ENCODE measurements at regions of chr17 and their contacts with region 1.

Region 1: DNA sequence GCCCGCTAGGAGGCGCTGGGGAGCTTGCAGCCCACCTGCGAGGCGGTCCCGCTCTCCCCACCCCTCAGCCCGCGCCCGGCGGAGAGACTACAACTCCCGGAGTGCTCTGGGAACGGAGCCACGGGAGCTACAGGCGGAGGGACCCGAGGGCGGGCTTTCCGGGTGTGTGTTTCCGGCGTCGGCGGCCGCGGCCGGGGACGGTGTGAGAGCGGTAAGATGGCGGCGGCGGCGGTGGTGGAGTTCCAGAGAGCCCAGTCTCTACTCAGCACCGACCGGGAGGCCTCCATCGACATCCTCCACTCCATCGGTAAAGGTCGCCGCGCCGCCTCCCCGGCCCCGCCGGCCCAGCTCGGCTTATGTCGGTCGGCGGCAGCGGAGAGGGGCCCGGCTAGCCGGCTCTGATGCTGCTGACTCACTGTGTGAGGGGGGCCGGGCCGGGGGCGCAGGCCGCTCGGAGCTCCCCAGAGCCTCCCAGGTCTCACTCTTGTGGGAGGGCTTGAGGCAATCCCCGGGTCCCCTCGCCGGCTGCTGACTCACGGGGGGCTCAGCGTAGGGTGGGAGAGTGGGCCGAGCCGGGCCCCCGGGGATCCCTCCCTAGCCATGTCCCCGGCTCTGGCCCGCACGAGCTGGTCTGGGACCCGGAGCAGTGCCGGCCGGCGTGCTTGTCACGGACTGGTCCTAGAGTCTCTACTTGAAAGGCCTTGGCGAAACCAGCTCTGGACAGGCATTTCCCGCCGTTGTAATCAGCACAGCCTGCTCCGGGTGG is at the start of gene PSMD11:
- DNase-seq: peak; percentile 92 to 98 (median 97)
- H3K4me3 ChIP-seq: peak within 1 kb of the TSS; percentile 76 to 100 (median 95)
- H3K27ac ChIP-seq: peak within 1 kb of the TSS in 58 of 59 donors; percentile 37 to 94 (median 87)
- H3K27me3 ChIP-seq: no peaks in the 10 kb centered on the region
- CTCF ChIP-seq: peak in 42 of 56 donors; percentile 0 to 97 (median 87)
- total RNA-seq, gene PSMD11: 63.1 to 112 (median 81.0) TPM

Region 2: DNA sequence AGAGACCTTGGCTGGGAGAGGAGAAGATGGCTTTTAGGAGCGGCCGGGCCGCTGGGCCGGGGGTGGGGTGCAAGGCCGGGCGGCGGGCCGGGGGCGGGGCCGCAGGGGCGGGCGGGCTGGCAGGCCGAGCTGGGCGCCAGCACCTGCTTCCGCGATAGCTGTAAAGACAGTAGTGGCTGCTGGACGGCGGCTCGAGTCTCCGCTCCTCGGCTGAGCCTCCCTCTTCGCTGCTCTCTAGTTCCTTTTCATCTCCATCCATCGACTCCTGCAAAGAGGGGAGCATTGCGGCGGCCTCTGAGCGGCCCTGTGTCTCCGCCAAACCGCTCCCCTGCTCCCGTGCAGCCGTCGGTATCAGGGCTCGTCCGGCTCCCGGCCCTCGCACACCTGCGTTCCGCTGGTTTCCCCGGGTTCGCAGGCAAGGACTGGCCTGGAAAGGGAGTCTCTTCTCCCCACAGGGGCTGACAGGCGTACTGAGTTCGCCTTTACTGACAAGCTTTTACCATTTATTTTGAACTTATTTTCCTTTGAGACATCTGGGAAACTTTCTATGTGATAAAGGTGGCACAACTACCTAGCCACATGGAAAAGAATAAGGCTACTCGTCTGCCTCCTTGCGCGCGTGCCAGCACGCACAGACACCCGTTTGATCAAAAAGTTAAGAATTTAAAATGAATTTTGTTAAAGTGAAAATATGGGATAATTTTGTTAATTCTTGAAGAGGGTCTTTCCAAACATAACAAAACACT is 102.5 kb before region 1 on chr17 and contains the start of gene C17orf75:
- intact Hi-C with region 1: loop called in 1 of 2 experiments (anchors 5 kb)
- DNase-seq: peak; percentile 69 to 89 (median 82)
- H3K4me3 ChIP-seq: peak within 1 kb of the TSS; percentile 56 to 83 (median 73)
- H3K27ac ChIP-seq: peak within 1 kb of the TSS; percentile 26 to 95 (median 87)
- H3K27me3 ChIP-seq: no peaks in the 10 kb centered on the region
- CTCF ChIP-seq: peak in 31 of 56 donors; percentile 3 to 45 (median 21)
- total RNA-seq, gene C17orf75: 13.8 to 48.9 (median 32.4) TPM

Region 3: GRCh38 chr17:32349854-32350665 is 94.4 kb before region 1 on chr17 and contains the start of gene ZNF207:
- intact Hi-C with region 1: loop called in 1 of 2 experiments (anchors 5 kb)
- DNase-seq: peak; percentile 89 to 95 (median 93)
- H3K4me3 ChIP-seq: peak within 1 kb of the TSS; percentile 59 to 99 (median 89)
- H3K27ac ChIP-seq: peak within 1 kb of the TSS; percentile 76 to 99 (median 95)
- H3K27me3 ChIP-seq: no peaks in the 10 kb centered on the region
- CTCF ChIP-seq: peak in 25 of 56 donors; percentile 3 to 52 (median 29)
- total RNA-seq, gene ZNF207: 116 to 206 (median 155) TPM